Activated CD4-positive, alpha-beta T cell treated with anti-CD3 and anti-CD28 coated beads, Interleukin-2, amount 10 ng/mL, durations not matched to agents 24 days and 14 days (primary cell): ENCODE measurements at regions of chr17 and their contacts with region 1.

Region 1: DNA sequence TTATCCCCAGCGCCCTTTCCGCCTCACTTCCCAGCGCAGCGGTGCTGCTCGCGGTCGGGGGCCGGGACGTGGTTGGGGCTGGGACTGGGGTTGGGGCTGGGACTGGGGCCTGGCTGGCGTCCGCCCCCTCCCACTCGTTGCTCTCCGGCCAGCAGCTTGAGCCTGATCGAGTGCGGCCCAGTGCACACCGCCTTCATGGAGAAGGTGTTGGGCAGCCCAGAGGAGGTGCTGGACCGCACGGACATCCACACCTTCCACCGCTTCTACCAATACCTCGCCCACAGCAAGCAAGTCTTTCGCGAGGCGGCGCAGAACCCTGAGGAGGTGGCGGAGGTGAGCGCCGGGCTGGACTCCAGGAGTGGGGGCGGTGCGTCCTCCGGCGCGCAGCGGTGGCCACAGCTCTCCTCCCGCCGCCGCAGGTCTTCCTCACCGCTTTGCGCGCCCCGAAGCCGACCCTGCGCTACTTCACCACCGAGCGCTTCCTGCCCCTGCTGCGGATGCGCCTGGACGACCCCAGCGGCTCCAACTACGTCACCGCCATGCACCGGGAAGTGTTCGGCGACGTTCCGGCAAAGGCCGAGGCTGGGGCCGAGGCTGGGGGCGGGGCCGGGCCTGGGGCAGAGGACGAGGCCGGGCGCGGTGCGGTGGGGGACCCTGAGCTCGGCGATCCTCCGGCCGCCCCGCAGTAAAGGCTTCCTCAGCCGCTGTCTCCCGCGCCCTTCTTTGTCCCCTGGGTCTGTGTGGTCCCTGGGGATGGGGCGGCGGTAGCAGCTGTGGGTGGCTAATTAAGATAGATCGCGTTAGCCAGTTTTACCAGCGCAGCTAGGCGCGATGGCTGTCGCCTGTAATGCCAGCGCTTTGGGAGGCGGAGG is 1.8 kb downstream of the HSD17B1 start:
- DNase-seq: peak; percentile 95
- H3K4me3 Mint-ChIP-seq: peak overlapping the region; percentile 95
- H3K27ac Mint-ChIP-seq: peak overlapping the region; percentile 92
- H3K4me1 Mint-ChIP-seq: peaks cover 18% of the 10 kb centered on the region
- H3K27me3 Mint-ChIP-seq: no peaks in the 10 kb centered on the region

Region 2: GRCh38 chr17:42354956-42355843 is 199.3 kb before region 1 on chr17:
- intact Hi-C with region 1: no loop called
- DNase-seq: no peak
- H3K4me3 Mint-ChIP-seq: peak overlapping the region; percentile 38
- H3K27ac Mint-ChIP-seq: peak overlapping the region; percentile 39
- H3K4me1 Mint-ChIP-seq: peaks cover 39% of the 10 kb centered on the region
- H3K27me3 Mint-ChIP-seq: no peaks in the 10 kb centered on the region

Region 3: GRCh38 chr17:42536048-42536371 is 18.5 kb before region 1 on chr17 and contains the start of gene NAGLU:
- intact Hi-C with region 1: loop called (anchors 2 kb)
- DNase-seq: peak; percentile 96
- H3K4me3 Mint-ChIP-seq: peak within 1 kb of the TSS; percentile 91
- H3K27ac Mint-ChIP-seq: peak within 1 kb of the TSS; percentile 84
- H3K4me1 Mint-ChIP-seq: peaks cover 34% of the 10 kb centered on the region
- H3K27me3 Mint-ChIP-seq: peaks cover 10% of the 10 kb centered on the region
- total RNA-seq, gene NAGLU: 20.4 and 20.7 TPM in 2 replicates

Region 4: DNA sequence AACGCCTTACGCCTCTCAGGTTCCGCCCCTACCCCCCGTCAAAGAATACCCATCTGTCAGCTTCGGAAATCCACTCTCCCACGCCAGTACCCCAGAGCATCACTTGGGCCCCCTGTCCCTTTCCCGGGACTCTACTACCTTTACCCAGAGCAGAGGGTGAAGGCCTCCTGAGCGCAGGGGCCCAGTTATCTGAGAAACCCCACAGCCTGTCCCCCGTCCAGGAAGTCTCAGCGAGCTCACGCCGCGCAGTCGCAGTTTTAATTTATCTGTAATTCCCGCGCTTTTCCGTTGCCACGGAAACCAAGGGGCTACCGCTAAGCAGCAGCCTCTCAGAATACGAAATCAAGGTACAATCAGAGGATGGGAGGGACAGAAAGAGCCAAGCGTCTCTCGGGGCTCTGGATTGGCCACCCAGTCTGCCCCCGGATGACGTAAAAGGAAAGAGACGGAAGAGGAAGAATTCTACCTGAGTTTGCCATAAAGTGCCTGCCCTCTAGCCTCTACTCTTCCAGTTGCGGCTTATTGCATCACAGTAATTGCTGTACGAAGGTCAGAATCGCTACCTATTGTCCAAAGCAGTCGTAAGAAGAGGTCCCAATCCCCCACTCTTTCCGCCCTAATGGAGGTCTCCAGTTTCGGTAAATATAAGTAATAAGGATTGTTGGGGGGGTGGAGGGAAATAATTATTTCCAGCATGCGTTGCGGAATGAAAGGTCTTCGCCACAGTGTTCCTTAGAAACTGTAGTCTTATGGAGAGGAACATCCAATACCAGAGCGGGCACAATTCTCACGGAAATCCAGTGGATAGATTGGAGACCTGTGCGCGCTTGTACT is 570.9 kb after region 1 on chr17 and contains the start of gene BRCA1:
- intact Hi-C with region 1: no loop called
- DNase-seq: peak; percentile 99
- H3K4me3 Mint-ChIP-seq: peak within 1 kb of the TSS; percentile 100
- H3K27ac Mint-ChIP-seq: peak within 1 kb of the TSS; percentile 99
- H3K4me1 Mint-ChIP-seq: peaks cover 29% of the 10 kb centered on the region
- H3K27me3 Mint-ChIP-seq: no peaks in the 10 kb centered on the region
- total RNA-seq, gene BRCA1: 88.1 and 93.3 TPM in 2 replicates